GM10248 (cell line): ENCODE measurements at regions of chr16 and their contacts with region 1.

Region 1: DNA sequence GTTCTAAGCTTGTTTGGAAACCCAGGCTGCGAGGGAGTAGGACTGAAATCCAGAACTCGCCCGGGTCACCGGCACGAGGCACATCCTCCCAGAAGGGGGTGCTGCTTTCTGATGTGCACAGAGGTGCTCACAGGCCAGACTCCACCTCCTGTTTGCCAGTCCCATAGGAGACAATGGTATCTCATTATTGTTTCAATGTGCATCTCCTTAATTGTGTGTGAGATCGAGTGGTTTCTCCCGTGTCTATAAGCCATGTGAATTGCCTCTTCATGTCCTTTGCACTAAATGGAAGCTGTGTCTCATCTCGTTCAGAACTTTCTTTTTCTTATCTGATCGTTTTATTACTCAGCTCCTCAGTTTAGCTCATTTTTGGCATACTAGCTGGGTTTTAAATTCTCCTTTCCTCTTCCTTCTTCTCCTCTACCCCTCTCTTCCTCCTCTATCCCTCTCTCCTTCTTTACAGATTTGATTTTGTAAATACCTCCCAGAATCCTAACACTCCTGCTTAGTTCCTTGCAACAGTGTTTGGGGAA is 32.1 kb upstream of the PRKCB start:
- DNase-seq: peak; percentile 82
- CTCF ChIP-seq: peak; percentile 85

Region 2: DNA sequence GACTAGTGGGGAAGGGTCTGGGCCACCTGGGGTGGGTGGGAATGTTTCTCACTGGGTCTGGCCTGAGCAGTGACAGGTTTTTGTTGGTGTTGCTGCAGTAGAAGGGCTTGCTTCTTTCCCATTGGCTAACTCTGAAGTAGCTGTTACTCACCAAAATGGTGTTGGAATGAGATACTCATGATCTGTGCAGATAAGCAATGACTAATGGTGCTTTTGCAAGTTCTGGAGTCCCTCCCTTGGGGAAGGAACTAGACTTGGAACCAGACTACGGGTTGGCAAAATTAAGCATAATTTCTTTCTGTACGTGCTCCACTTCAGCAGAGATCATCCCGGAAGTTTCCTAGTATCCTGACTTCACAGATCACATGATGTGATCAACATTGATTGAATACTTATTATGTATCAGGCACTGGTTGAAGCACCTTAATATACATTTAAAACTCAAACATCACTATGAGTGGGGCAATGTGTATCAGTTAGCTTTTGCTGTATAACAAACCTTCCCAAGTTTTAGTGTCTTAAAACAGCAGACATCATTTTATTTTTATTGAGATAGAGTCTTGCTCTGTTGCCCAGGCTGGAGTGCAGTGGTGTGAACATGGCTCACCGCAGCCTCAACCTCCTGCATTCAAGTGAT is 18.7 kb before region 1 on chr16:
- CTCF ChIA-PET with region 1: interaction called, 39 read pairs
- POLR2A ChIA-PET with region 1: no interaction called
- DNase-seq: no peak
- CTCF ChIP-seq: no peak

Region 3: GRCh38 chr16:23821467-23821866 is 17.8 kb after region 1 on chr16:
- CTCF ChIA-PET with region 1: interaction called, 25 read pairs
- POLR2A ChIA-PET with region 1: no interaction called
- DNase-seq: no peak
- CTCF ChIP-seq: no peak

Region 4: GRCh38 chr16:23835390-23836077 is 31.9 kb after region 1 on chr16 and contains the start of gene PRKCB:
- CTCF ChIA-PET with region 1: interaction called, 22 read pairs
- POLR2A ChIA-PET with region 1: interaction called, 8 read pairs
- DNase-seq: peak; percentile 95
- CTCF ChIP-seq: no peak

Region 5: GRCh38 chr16:24036614-24037013 is 233.0 kb after region 1 on chr16:
- CTCF ChIA-PET with region 1: interaction called, 132 read pairs
- POLR2A ChIA-PET with region 1: no interaction called
- DNase-seq: peak; percentile 66
- CTCF ChIP-seq: peak; percentile 66

Region 6: GRCh38 chr16:24041826-24042631 is 238.4 kb after region 1 on chr16:
- CTCF ChIA-PET with region 1: interaction called, 132 read pairs
- POLR2A ChIA-PET with region 1: no interaction called
- DNase-seq: peak; percentile 82
- CTCF ChIP-seq: peak; percentile 65